Body of pancreas (tissue), 4 donors: ENCODE measurements at regions of chr11 and their contacts with region 1.

Region 1: DNA sequence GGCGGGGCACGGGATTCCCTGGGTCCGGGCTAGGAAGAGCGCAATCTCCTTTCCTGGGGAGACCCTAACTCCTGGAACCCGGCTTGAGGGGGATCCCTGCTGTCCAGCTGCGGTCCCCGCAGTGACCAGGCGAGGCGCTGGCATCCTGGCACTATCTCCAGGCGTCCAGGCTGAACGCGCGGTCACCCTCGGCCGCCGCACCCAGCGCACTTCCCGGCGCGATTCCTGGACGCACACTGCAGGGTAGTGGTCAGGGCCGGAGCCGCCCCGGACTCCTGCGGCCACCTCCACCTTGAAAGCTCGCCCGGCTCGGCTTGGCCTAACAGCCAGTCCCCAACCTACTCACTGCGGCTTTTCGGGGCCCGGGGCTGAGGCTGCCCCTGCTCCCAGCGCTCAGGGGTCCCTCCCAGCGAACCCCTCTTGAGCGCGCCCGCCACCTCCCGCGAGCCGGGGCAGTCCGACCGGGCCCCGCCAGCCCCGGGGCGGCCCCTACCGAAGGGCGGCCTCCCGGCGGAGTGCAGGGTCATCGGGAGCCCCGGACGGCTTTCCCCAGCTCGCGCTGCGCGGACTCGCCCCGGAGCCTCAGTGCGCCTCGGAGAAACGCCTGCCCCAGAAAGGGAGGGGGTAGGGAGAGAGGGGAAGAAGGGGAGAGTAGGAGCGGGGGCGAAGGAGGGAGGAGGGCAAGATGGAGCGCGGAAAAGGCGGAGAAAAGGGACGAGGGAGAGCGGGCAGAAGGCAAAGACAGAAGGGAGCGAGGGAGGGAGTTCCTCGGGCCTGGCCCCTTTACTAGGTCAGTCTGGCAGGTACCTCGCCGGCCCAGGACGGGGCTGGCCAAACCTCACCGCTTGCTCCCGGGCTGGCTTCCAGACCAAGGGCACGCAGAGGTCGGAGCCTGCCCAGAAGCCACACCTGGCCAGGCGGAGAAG is 1.0 kb downstream of the POU2AF3 start:
- DNase-seq: peak; percentile 77 to 84 (median 80)
- ATAC-seq: peak; percentile 84
- H3K4me3 ChIP-seq: peak overlapping the region; percentile 51 to 63
- H3K27ac ChIP-seq: peak overlapping the region; percentile 88 to 93 (median 90)
- H3K4me1 ChIP-seq: peaks cover 50% of the 10 kb centered on the region
- H3K27me3 ChIP-seq: no peaks in the 10 kb centered on the region
- CTCF ChIP-seq: peak; percentile 42 to 87 (median 75)
- POLR2A ChIP-seq: peak; percentile 42 to 74 (median 72)

Region 2: GRCh38 chr11:111123463-111124398 is 175.6 kb before region 1 on chr11:
- intact Hi-C with region 1: no loop called
- DNase-seq: no peak
- ATAC-seq: no peak
- H3K4me3 ChIP-seq: no peak overlapping the region
- H3K27ac ChIP-seq: no peak overlapping the region
- H3K4me1 ChIP-seq: no peaks in the 10 kb centered on the region
- H3K27me3 ChIP-seq: no peaks in the 10 kb centered on the region
- CTCF ChIP-seq: no peak
- POLR2A ChIP-seq: no peak

Region 3: GRCh38 chr11:111422494-111423249 is 123.3 kb after region 1 on chr11:
- intact Hi-C with region 1: loop called (anchors 5 kb)
- DNase-seq: peak; percentile 69 to 77 (median 73)
- ATAC-seq: peak; percentile 73
- H3K4me3 ChIP-seq: no peak overlapping the region
- H3K27ac ChIP-seq: no peak overlapping the region
- H3K4me1 ChIP-seq: peaks cover 27% of the 10 kb centered on the region
- H3K27me3 ChIP-seq: no peaks in the 10 kb centered on the region
- CTCF ChIP-seq: peak; percentile 79 to 94 (median 85)
- POLR2A ChIP-seq: no peak